ENCODE measurements at regions of chr15 and their contacts with region 1.

Region 1: DNA sequence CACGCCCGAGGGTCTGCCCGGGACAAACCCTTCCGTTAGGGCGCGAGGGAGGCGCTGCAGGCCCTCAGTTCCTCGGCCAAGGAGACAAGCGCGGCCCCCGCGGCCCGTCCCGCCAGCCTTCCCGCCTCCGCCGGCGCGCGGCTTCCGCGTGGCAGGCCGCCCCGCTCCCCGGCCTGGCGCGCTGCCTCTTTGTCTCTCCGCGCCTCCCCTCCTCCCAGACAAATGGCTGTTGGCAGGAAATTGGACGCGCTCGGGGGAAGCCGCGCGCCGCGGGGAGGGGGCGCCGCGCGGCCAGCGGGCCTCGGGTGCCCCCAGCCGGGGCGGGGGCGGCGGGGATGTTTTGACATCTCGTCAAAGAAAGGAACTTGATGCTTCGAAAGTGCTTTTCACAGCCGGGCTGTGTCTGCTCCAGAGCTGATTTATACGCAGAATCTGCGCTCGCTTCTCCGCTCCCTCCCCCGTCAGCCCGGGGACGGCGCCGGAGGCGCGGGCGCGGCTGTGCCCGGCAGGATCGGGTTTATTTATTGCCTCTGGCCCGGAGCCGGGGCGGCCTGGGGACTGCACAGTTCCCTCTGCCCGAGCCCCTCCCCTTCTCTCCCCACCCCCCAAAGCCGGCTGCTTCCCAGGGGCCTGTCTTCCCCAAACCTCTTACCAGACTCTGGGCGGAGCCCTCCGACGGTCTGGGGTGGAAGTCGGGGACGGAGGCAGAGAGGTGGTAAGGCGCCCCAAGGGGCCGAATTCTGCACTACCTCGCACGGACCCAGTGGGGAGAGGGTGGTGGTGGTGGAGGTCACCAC is 20.7 kb downstream of the SHF start:
- DNase-seq: peak; percentile 82
- ATAC-seq: peak; percentile 80
- H3K4me3 ChIP-seq: peak overlapping the region; percentile 75
- H3K27ac ChIP-seq: peak overlapping the region; percentile 63
- H3K4me1 ChIP-seq: peaks cover 20% of the 10 kb centered on the region
- H3K27me3 ChIP-seq: no peaks in the 10 kb centered on the region
- CTCF ChIP-seq: peak; percentile 70

Region 2: GRCh38 chr15:45126535-45127158 is 40.4 kb before region 1 on chr15:
- CTCF ChIA-PET with region 1: interaction called, 27 read pairs
- POLR2A ChIA-PET with region 1: no interaction called
- intact Hi-C with region 1: loop called (anchors 2 kb)
- DNase-seq: peak; percentile 76
- ATAC-seq: peak; percentile 60
- H3K4me3 ChIP-seq: no peak overlapping the region
- H3K27ac ChIP-seq: no peak overlapping the region
- H3K4me1 ChIP-seq: peaks cover 15% of the 10 kb centered on the region
- H3K27me3 ChIP-seq: no peaks in the 10 kb centered on the region
- CTCF ChIP-seq: peak; percentile 96

Region 3: DNA sequence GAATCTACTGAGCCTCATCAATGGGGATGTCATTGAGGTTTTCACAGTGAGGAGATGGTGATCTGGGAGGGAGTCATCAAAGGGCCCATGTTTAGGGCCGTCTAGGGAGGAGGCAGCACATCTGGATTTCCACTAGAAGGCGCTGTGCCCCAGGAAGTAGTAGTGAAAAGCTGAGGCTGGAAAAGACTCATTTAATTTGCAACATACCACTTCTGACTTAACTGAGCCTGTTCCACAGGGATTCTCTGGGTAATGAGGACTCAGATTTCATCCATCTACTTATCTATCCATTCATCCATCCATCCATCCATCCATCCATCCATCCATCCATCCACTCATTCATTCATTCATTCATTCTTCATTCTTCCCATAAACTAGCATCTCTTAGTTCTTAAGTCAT is 38.2 kb after region 1 on chr15:
- CTCF ChIA-PET with region 1: interaction called, 36 read pairs
- POLR2A ChIA-PET with region 1: interaction called, 3 read pairs
- intact Hi-C with region 1: loop called (anchors 1 kb)
- DNase-seq: peak; percentile 86
- ATAC-seq: peak; percentile 35
- H3K4me3 ChIP-seq: no peak overlapping the region
- H3K27ac ChIP-seq: no peak overlapping the region
- H3K4me1 ChIP-seq: no peaks in the 10 kb centered on the region
- H3K27me3 ChIP-seq: no peaks in the 10 kb centered on the region
- CTCF ChIP-seq: peak; percentile 94

Region 4: GRCh38 chr15:45338417-45338816 is 171.4 kb after region 1 on chr15:
- CTCF ChIA-PET with region 1: no interaction called
- POLR2A ChIA-PET with region 1: no interaction called
- intact Hi-C with region 1: no loop called
- DNase-seq: no peak
- ATAC-seq: no peak
- H3K4me3 ChIP-seq: no peak overlapping the region
- H3K27ac ChIP-seq: no peak overlapping the region
- H3K4me1 ChIP-seq: peaks cover 3% of the 10 kb centered on the region
- H3K27me3 ChIP-seq: no peaks in the 10 kb centered on the region
- CTCF ChIP-seq: no peak

Region 5: DNA sequence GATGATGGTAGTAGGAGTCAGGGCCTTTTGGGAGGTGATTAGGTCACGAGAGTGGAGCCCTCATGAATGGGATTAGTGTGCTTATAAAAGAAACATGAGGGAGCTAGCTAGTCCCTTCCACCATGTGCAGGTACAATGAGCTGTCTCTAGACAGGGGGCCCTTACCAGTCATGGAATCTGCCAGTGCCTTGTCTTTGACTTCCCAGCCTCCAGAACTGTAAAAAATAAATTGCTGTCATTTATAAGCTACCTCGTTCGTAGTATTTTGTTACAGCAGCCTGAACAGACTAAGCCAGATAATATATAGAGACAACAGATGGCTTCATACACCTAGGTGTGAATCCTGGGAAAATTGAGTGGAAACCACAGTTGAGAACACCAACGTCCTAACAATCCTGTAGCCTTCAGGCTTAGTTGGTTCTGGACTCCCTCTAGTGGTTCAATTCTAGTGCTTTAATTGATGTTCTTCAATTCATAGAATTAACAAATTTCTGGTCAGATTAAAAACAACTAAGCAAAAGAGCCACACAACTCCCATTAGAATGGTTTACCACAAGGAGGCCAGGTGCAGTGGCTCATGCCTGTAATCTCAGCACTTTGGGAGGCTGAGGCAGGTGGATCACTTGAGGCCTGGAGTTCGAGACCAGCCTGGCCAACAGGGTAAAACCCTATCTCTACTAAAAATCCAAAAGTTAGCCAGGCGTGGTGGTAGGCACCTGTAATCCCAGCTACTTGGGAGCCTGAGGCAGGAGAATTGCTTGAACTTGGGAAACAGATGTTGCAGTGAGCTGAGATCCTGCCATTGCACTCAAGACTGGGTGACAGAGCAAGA is 232.6 kb after region 1 on chr15:
- CTCF ChIA-PET with region 1: interaction called, 3 read pairs
- POLR2A ChIA-PET with region 1: no interaction called
- intact Hi-C with region 1: loop called (anchors 1 kb)
- DNase-seq: peak; percentile 89
- ATAC-seq: peak; percentile 13; the same call in 1 of the 2 replicates
- H3K4me3 ChIP-seq: no peak overlapping the region
- H3K27ac ChIP-seq: no peak overlapping the region
- H3K4me1 ChIP-seq: peaks cover 28% of the 10 kb centered on the region
- H3K27me3 ChIP-seq: no peaks in the 10 kb centered on the region
- CTCF ChIP-seq: peak; percentile 82